CD8-positive, alpha-beta memory T cell (primary cell): ENCODE measurements at regions of chr6 and their contacts with region 1.

Region 1: DNA sequence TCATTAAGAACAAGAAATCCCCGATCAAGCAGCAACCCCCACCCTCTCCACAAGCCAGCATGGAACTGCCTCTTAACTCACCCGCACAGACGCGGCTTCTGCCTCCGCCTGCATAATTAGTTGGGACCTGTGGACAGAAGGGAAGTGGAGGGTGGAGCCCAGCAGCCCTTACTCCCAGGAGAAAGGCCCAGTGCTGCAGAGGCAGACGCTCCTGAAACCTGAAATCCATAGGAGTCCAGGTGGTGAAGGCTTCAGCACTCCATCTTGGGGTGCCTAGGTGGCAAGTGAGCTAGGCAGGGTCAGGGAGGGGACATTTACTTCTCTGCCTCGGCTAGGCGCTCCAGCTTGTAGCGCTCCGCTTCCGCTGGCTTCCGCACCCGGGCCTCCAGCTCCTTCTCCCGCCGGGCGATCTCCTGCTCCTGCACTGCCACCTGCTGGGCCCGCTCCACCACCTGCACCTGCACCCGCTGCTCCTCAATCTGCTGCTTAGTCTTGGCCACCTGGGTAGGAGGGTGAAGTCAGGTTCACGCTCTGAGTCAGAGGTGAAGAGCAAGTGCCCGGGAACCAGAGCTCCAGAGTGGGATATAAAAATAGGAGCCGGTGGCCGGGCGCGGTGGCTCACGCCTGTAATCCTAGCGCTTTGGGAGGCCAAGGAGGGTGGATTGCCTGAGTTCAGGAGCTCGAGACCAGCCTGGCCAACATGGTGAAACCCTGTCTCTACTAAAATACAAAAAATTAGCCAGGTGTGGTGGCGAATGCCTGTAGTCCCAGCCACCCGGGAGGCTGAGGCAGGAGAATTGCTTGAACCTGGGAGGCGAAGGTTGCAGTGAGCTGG is 10.7 kb downstream of the TUBB start:
- DNase-seq: peak; percentile 71 to 86 (median 73)
- H3K4me3 ChIP-seq: no peak overlapping the region
- H3K4me3 Mint-ChIP-seq: peak overlapping the region in 4 of 7 donors; percentile 23 to 43 (median 34)
- H3K27ac ChIP-seq: no peak overlapping the region
- H3K27ac Mint-ChIP-seq: peak overlapping the region in 7 of 8 donors; percentile 47 to 86 (median 65)
- H3K4me1 ChIP-seq: peaks cover 33% of the 10 kb centered on the region
- H3K4me1 Mint-ChIP-seq: peaks cover 23 to 49% (median 32%) of the 10 kb centered on the region in 3 donors
- H3K27me3 ChIP-seq: no peaks in the 10 kb centered on the region
- H3K27me3 Mint-ChIP-seq: no peaks in the 10 kb centered on the region

Region 2: GRCh38 chr6:30583921-30584320 is 146.9 kb before region 1 on chr6:
- CTCF ChIA-PET with region 1: no interaction called
- POLR2A ChIA-PET with region 1: no interaction called
- DNase-seq: no peak
- H3K4me3 ChIP-seq: no peak overlapping the region
- H3K4me3 Mint-ChIP-seq: no peak overlapping the region
- H3K27ac ChIP-seq: no peak overlapping the region
- H3K27ac Mint-ChIP-seq: peak overlapping the region in 4 of 8 donors; percentile 4 to 47 (median 24)
- H3K4me1 ChIP-seq: no peaks in the 10 kb centered on the region
- H3K4me1 Mint-ChIP-seq: peaks cover 0 to 1% (median 0%) of the 10 kb centered on the region in 3 donors
- H3K27me3 ChIP-seq: no peaks in the 10 kb centered on the region
- H3K27me3 Mint-ChIP-seq: no peaks in the 10 kb centered on the region

Region 3: GRCh38 chr6:30600451-30600961 is 130.3 kb before region 1 on chr6:
- CTCF ChIA-PET with region 1: interaction called, 12 read pairs
- POLR2A ChIA-PET with region 1: interaction called, 3 read pairs
- DNase-seq: no peak
- H3K4me3 ChIP-seq: no peak overlapping the region
- H3K4me3 Mint-ChIP-seq: no peak overlapping the region
- H3K27ac ChIP-seq: no peak overlapping the region
- H3K27ac Mint-ChIP-seq: peak overlapping the region in 5 of 8 donors; percentile 33 to 87 (median 73)
- H3K4me1 ChIP-seq: peaks cover 7% of the 10 kb centered on the region
- H3K4me1 Mint-ChIP-seq: peaks cover 22 to 28% (median 24%) of the 10 kb centered on the region in 3 donors
- H3K27me3 ChIP-seq: no peaks in the 10 kb centered on the region
- H3K27me3 Mint-ChIP-seq: peaks cover 0 to 2% of the 10 kb centered on the region in 2 donors

Region 4: DNA sequence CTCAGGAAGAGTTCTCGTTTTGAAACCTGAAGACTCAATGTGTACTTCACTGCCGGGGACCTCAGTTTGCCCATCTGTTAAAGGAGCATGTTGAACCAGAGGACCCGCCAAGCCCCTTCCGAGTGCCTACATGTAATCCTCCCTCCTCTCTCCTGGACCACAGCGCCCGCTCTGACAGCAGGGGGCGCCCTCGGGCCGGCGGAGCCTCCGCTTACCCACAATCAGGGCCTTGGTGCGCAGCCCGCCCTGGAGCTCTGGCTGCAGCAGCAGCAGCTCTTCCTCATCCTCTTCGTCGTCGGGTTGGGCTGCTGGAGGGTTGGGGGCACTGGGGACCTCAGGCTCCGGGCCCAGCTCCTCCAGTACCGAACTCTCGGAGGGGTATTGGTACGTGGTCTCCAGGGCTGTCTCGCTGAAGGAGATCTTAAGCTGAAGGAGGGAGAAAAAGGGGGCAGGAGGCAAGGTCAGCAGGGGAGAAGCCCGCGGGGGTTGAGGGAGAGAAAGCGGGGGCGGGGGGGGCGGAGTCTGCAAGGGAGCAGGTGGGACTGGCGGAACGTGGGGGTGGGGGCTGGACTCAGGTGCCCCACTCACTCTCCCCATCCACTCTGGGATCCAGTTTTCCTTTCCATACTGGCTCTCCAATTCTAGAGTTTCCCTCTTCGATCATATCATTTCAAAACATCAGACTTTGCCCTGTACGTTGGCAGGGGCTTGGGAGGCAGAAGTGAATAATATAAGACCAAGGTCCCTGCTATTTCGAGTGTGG is 51.7 kb before region 1 on chr6:
- CTCF ChIA-PET with region 1: interaction called, 697 read pairs
- POLR2A ChIA-PET with region 1: interaction called, 7 read pairs
- DNase-seq: peak; percentile 86 to 93 (median 90)
- H3K4me3 ChIP-seq: peak overlapping the region; percentile 92
- H3K4me3 Mint-ChIP-seq: peak overlapping the region; percentile 95 to 100 (median 99)
- H3K27ac ChIP-seq: peak overlapping the region; percentile 53
- H3K27ac Mint-ChIP-seq: peak overlapping the region; percentile 80 to 100 (median 99)
- H3K4me1 ChIP-seq: peaks cover 38% of the 10 kb centered on the region
- H3K4me1 Mint-ChIP-seq: peaks cover 42 to 51% (median 44%) of the 10 kb centered on the region in 3 donors
- H3K27me3 ChIP-seq: no peaks in the 10 kb centered on the region
- H3K27me3 Mint-ChIP-seq: no peaks in the 10 kb centered on the region

Region 5: DNA sequence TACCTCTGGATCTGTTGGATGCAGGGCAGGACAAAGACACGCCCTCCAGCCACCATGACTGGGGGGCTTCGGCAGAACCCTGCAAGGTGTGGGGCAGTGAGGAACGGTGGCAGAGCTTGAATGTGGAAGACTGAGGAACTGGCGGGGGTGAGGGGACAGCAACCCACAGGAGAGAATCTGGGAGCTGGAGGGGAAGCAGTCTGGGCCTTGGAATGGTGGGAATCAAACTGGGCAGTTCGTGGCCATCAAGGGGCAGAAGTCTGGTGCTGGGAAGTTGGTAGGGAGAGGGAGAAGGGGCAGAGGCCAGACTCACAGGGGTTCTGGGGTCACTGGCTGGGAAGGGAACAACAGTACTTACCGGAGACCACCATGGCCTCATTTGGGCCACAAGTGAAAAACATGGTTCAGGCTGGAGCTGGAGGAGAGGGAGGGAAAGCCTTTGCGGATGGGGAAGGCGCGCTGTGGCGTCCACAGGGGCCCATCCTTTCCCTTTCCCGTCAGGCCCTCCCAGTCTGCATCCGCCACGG is 11.0 kb after region 1 on chr6:
- CTCF ChIA-PET with region 1: interaction called, 11 read pairs
- POLR2A ChIA-PET with region 1: interaction called, 3 read pairs
- DNase-seq: no peak
- H3K4me3 ChIP-seq: peak overlapping the region; percentile 80
- H3K4me3 Mint-ChIP-seq: peak overlapping the region; percentile 89 to 96 (median 90)
- H3K27ac ChIP-seq: peak overlapping the region; percentile 77
- H3K27ac Mint-ChIP-seq: peak overlapping the region; percentile 74 to 94 (median 90)
- H3K4me1 ChIP-seq: peaks cover 50% of the 10 kb centered on the region
- H3K4me1 Mint-ChIP-seq: peaks cover 57 to 70% (median 61%) of the 10 kb centered on the region in 3 donors
- H3K27me3 ChIP-seq: no peaks in the 10 kb centered on the region
- H3K27me3 Mint-ChIP-seq: no peaks in the 10 kb centered on the region